ENCODE measurements at regions of chr2 and their contacts with region 1.

Region 1: GRCh38 chr2:235142601-235143000 is 190.8 kb downstream of the SH3BP4 start:
- DNase-seq: peak in 1 of 6 donors; percentile 20
- ATAC-seq: peak in 3 of 4 donors; percentile 69 to 80 (median 79)
- H3K4me3 ChIP-seq: no peak overlapping the region
- H3K27ac ChIP-seq: no peak overlapping the region
- H3K4me1 ChIP-seq: no peaks in the 10 kb centered on the region
- H3K27me3 ChIP-seq: no peaks in the 10 kb centered on the region
- CTCF ChIP-seq: no peak

Region 2: DNA sequence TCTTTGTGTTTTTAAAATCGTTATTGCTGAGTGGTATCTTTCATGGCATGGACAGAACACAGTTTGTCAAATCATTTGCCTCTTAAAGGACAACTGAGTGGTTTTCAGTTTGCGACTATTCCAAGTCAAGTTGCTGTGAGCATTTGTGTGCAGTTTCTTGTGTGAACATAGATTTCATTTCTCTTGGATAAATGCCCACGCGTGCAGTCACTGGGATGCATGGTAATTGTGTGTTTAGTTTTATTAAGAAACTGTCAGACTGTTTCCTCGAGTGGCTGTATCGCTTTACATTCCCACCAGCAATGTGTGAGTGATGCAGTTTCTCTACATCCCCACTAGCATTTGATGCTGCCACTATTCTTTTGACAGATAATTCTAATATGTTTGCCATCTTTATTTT is 491.7 kb before region 1 on chr2:
- intact Hi-C with region 1: no loop called
- DNase-seq: no peak
- ATAC-seq: no peak
- H3K4me3 ChIP-seq: no peak overlapping the region
- H3K27ac ChIP-seq: no peak overlapping the region
- H3K4me1 ChIP-seq: no peaks in the 10 kb centered on the region
- H3K27me3 ChIP-seq: no peaks in the 10 kb centered on the region
- CTCF ChIP-seq: no peak

Region 3: GRCh38 chr2:234771970-234772724 is 370.5 kb before region 1 on chr2:
- intact Hi-C with region 1: no loop called
- DNase-seq: no peak
- ATAC-seq: no peak
- H3K4me3 ChIP-seq: no peak overlapping the region
- H3K27ac ChIP-seq: no peak overlapping the region
- H3K4me1 ChIP-seq: no peaks in the 10 kb centered on the region
- H3K27me3 ChIP-seq: no peaks in the 10 kb centered on the region
- CTCF ChIP-seq: no peak

Region 4: DNA sequence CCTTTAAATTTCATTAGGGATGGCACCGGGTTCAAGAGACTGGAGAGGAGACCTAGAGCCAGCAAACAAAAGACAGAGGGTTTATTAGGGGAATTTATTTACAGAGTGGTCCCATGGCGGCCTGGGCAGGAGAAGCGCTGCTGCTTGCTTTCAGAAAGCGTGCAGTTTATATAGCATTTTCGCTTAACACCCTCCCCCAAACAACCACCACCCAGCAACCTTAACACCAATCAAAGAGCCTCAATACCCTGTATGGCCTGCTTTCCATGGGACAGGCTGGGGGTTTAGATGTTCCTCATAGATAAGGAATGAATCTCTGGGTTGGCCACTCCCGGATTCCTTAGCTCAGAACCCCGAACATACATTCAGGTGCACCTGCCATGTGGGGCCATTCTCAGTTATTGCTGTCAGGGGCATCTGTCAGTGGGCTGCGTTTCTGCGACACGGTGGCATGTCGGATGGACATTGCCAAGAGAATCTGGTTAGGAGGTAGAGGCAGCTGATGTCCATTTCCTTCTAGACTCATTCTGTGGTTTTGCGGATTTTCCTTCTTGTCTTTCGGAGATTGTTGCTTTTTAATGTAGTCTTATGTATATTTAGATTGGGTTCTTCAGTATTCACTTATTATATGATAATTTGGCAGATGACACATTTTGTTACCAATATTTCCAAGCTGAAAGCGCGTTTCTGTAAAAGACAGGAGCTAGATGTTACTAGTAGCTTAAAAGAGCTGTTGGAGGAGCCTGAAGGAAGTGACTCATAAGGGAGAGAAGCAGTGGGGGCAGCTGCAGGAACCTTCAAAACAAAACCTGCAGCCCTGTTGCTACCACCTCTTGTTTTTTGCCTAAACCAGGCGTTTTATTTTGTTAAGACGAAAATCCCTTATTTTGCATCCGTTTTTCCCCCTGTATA is 358.4 kb after region 1 on chr2:
- intact Hi-C with region 1: loop called in 2 of 3 experiments (anchors 5 to 10 kb)
- DNase-seq: no peak
- ATAC-seq: no peak
- H3K4me3 ChIP-seq: no peak overlapping the region
- H3K27ac ChIP-seq: no peak overlapping the region
- H3K4me1 ChIP-seq: peaks cover 10 to 15% (median 11%) of the 10 kb centered on the region in 3 donors
- H3K27me3 ChIP-seq: no peaks in the 10 kb centered on the region
- CTCF ChIP-seq: no peak

Region 5: DNA sequence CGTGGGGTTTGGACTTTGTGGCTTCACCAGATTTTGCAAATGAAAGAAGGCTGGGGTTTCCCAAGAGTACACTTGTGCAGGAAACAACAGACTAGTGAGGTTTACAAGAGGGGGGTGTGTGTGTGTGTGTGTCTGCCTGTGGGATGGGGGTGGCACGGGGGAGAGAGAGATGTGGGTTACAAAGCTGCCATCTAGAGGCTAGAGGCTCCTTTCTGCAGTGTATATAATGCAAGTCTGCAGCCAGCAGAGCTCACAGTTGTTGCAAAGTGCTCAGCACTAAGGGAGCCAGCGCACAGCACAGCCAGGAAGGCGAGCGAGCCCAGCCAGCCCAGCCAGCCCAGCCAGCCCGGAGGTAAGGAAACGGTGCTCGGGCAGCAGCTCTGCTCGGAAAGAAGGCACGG is 1427.0 kb after region 1 on chr2 and contains the start of gene ACKR3:
- intact Hi-C with region 1: no loop called
- DNase-seq: peak; percentile 76 to 87 (median 84)
- ATAC-seq: peak; percentile 67 to 81 (median 77)
- H3K4me3 ChIP-seq: peak within 1 kb of the TSS; percentile 21 to 53 (median 41)
- H3K27ac ChIP-seq: peak within 1 kb of the TSS; percentile 67 to 82 (median 78)
- H3K4me1 ChIP-seq: peaks cover 0 to 13% (median 0%) of the 10 kb centered on the region in 3 donors
- H3K27me3 ChIP-seq: no peaks in the 10 kb centered on the region
- CTCF ChIP-seq: no peak
- total RNA-seq, gene ACKR3: 9.1 to 30.3 (median 15.6) TPM